Activated CD4-positive, alpha-beta T cell treated with anti-CD3 and anti-CD28 coated beads, Interleukin-2, amount 10 ng/mL, durations not matched to agents 24 days and 14 days (primary cell): ENCODE measurements at regions of chr2 and their contacts with region 1.

Region 1: GRCh38 chr2:84946204-84947009 is 24.6 kb upstream of the KCMF1 start:
- DNase-seq: peak; percentile 89
- H3K4me3 Mint-ChIP-seq: peak overlapping the region; percentile 50
- H3K27ac Mint-ChIP-seq: peak overlapping the region; percentile 89
- H3K4me1 Mint-ChIP-seq: peaks cover 45% of the 10 kb centered on the region
- H3K27me3 Mint-ChIP-seq: no peaks in the 10 kb centered on the region

Region 2: GRCh38 chr2:84888401-84889276 is 57.8 kb before region 1 on chr2:
- intact Hi-C with region 1: loop called (anchors 2 kb)
- DNase-seq: peak; percentile 89
- H3K4me3 Mint-ChIP-seq: peak overlapping the region; percentile 68
- H3K27ac Mint-ChIP-seq: peak overlapping the region; percentile 91
- H3K4me1 Mint-ChIP-seq: peaks cover 42% of the 10 kb centered on the region
- H3K27me3 Mint-ChIP-seq: no peaks in the 10 kb centered on the region

Region 3: GRCh38 chr2:84905181-84906107 is 41.0 kb before region 1 on chr2 and contains the start of gene TMSB10:
- intact Hi-C with region 1: loop called (anchors 2 kb)
- DNase-seq: peak; percentile 97
- H3K4me3 Mint-ChIP-seq: peak within 1 kb of the TSS; percentile 91
- H3K27ac Mint-ChIP-seq: peak within 1 kb of the TSS; percentile 95
- H3K4me1 Mint-ChIP-seq: peaks cover 62% of the 10 kb centered on the region
- H3K27me3 Mint-ChIP-seq: no peaks in the 10 kb centered on the region
- total RNA-seq, gene TMSB10: 2,196 and 2,218 TPM in 2 replicates

Region 4: GRCh38 chr2:84970868-84971509 is 24.6 kb after region 1 on chr2 and contains the start of gene KCMF1:
- intact Hi-C with region 1: loop called (anchors 1 kb)
- DNase-seq: peak; percentile 92
- H3K4me3 Mint-ChIP-seq: peak within 1 kb of the TSS; percentile 95
- H3K27ac Mint-ChIP-seq: peak within 1 kb of the TSS; percentile 100
- H3K4me1 Mint-ChIP-seq: peaks cover 35% of the 10 kb centered on the region
- H3K27me3 Mint-ChIP-seq: no peaks in the 10 kb centered on the region
- total RNA-seq, gene KCMF1: 98.1 and 101 TPM in 2 replicates

Region 5: DNA sequence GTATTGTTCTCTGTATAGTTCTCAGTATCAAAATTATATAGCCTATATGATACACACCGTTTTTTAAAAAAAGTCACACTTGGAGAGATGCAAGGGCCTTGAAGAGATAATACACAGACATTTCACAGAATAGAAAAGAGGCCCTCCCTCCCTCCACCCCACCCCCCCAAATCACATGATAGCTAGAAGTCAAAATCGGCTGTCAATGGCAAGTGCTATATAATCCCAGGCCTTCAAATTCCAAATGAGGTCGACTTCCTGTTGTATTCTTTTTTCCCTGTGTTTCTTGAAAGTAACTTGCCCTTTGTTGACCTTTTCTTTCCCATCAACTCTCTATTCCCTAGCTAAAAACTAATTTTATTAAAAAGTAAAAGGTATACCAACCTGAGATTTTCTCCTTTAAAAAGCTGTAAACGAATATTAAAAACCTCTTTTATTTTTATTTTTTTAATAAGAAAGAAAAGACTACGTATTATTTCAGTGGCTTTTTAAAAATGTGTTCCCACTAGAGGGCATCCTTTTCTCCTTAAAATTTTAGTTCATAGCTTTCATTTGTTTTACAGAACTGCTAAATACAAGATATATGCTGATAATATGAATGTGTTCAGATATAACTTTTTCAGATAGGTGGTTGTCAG is 71.1 kb after region 1 on chr2:
- intact Hi-C with region 1: loop called (anchors 1 kb)
- DNase-seq: no peak
- H3K4me3 Mint-ChIP-seq: no peak overlapping the region
- H3K27ac Mint-ChIP-seq: peak overlapping the region; percentile 83
- H3K4me1 Mint-ChIP-seq: peaks cover 48% of the 10 kb centered on the region
- H3K27me3 Mint-ChIP-seq: no peaks in the 10 kb centered on the region

Region 6: DNA sequence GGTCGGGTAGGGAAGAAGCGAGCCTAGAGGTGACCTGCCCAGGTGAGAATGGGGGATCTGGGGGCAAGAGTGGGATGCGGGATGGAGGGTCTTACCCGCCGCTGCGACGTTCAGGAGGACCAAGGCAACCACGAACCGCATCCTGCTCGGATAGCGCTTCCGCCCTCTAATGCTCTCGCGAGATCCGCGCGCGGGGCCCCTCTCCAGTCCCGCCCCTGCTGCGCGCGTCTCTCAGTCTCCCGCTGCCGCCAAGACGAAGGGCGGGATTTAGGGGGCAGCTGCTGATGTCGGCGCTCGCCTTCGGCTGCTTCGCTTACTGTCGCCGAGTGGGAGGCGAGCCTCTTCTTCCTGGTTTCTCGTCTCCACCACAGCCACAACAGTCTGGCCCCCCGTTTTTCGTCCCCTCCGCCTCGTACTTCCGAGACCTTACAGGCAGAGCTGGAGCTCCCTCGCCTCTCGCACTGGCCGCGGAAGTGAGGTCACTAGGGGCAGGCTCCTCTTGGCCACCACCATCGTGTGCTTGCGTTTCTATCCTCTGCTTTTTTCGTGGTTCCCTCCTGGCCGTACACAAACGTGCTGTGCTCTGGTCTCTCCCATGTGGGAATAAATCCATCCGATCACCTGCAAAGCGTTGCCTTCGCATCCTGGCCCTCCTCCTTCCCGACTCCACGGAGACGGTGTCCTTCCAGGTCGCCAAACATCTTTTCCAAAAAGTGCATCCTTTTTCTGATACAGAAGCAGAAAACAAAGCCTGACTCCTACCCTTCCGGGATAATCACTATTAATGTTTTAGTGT is 381.6 kb after region 1 on chr2 and contains the start of gene TGOLN2:
- intact Hi-C with region 1: loop called (anchors 5 kb)
- DNase-seq: peak; percentile 98
- H3K4me3 Mint-ChIP-seq: peak within 1 kb of the TSS; percentile 95
- H3K27ac Mint-ChIP-seq: peak within 1 kb of the TSS; percentile 99
- H3K4me1 Mint-ChIP-seq: peaks cover 31% of the 10 kb centered on the region
- H3K27me3 Mint-ChIP-seq: no peaks in the 10 kb centered on the region
- total RNA-seq, gene TGOLN2: 89.6 and 94.1 TPM in 2 replicates